ENCODE measurements at regions of chr3 and their contacts with region 1.

Region 1: GRCh38 chr3:57298041-57298440 is 5.6 kb upstream of the ASB14 start:
- DNase-seq: no peak

Region 2: GRCh38 chr3:57354768-57355167 is 56.7 kb after region 1 on chr3:
- in situ Hi-C with region 1: loop called (anchors 10 kb)
- DNase-seq: no peak

Measured in G401 (cell line).